Stomach (tissue), 19 donors: ENCODE measurements at regions of chr1 and their contacts with region 1.

Region 1: GRCh38 chr1:8314346-8315280 is 3.3 kb upstream of the SLC45A1 start:
- DNase-seq: peak; percentile 83 to 93
- H3K4me3 ChIP-seq: no peak overlapping the region
- H3K27ac ChIP-seq: no peak overlapping the region
- H3K4me1 ChIP-seq: peaks cover 12 to 50% (median 35%) of the 10 kb centered on the region in 4 donors
- H3K27me3 ChIP-seq: peaks cover 0 to 29% (median 10%) of the 10 kb centered on the region in 3 donors
- CTCF ChIP-seq: peak in 5 of 7 experiments; percentile 69 to 97 (median 91)
- EP300 ChIP-seq: no peak
- POLR2A ChIP-seq: no peak

Region 2: DNA sequence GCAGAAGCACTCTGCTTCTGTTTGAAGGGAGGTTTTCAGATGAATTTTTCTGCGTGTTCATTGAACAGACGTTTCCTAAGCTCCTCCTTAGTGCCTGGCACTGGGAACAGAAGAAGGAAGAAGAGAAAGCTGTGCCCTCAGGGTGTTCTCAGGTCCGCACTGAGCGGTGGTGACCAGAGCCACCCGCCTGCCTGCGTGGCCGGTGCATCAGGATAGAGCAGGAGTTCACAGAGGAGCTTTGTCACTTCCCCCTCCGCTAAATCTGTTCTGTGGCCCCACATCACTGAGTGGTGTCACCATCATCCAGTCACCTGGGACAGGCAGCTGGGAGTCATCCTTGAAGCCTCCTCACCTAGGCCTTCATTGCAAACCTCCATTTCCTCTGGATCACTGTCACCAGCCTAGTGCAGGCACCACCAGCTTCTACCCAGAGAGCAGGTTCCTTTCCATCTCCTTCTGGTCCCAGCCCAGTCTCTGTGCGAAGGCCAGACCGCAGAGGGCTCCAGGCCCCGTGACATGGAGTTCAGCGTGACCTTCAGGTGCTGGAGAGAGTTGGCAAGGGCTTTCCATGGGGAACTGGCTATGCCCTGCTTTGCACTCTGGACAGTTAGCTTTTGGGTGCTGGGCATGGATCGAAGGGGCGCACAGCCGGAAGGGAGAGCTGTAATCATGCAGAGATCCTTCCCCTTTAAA is 331.4 kb before region 1 on chr1:
- intact Hi-C with region 1: loop called (anchors 5 kb)
- DNase-seq: no peak
- H3K4me3 ChIP-seq: no peak overlapping the region
- H3K27ac ChIP-seq: no peak overlapping the region
- H3K4me1 ChIP-seq: peaks cover 0 to 14% (median 8%) of the 10 kb centered on the region in 4 donors
- H3K27me3 ChIP-seq: no peaks in the 10 kb centered on the region
- CTCF ChIP-seq: no peak
- EP300 ChIP-seq: no peak
- POLR2A ChIP-seq: no peak

Region 3: DNA sequence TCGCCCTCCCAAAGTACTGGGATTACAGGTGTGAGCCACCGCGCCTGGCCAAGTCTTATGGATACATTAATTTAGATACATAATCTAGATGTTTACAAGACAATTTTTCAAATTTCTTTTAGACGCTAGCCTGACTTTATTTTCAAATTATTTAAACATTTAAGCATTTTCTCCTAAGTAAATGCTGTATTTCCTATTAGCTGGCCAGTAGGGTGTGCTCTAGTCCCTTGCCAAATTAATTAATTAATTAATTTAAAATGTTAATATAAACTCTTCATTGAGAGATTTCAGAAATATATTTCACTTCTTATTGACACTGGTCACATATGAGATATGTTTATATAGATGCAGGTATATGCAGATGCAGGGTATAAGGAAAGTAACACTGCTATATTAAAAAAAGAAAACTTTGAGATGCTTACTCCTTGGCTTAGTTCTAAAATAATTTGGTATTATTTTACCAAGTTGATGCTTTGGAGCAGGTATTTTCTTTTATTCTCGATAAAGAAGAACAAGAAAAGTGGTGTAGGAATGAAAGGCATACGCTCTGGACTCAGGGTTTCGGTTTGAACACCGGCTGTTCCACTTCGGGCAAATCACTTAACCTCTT is 283.3 kb before region 1 on chr1:
- intact Hi-C with region 1: loop called (anchors 5 kb)
- DNase-seq: peak in 1 of 2 donors; percentile 72
- H3K4me3 ChIP-seq: no peak overlapping the region
- H3K27ac ChIP-seq: peak overlapping the region in 1 of 5 donors; percentile 60
- H3K4me1 ChIP-seq: peaks cover 21 to 40% (median 30%) of the 10 kb centered on the region in 4 donors
- H3K27me3 ChIP-seq: no peaks in the 10 kb centered on the region
- CTCF ChIP-seq: peak in 5 of 7 experiments; percentile 45 to 75 (median 52)
- EP300 ChIP-seq: no peak
- POLR2A ChIP-seq: no peak

Region 4: GRCh38 chr1:8133657-8134430 is 180.8 kb before region 1 on chr1:
- intact Hi-C with region 1: no loop called
- DNase-seq: peak; percentile 41 to 84
- H3K4me3 ChIP-seq: no peak overlapping the region
- H3K27ac ChIP-seq: peak overlapping the region in 4 of 5 donors; percentile 82 to 90 (median 84)
- H3K4me1 ChIP-seq: peaks cover 0 to 52% (median 30%) of the 10 kb centered on the region in 4 donors
- H3K27me3 ChIP-seq: no peaks in the 10 kb centered on the region
- CTCF ChIP-seq: no peak
- EP300 ChIP-seq: peak; percentile 48
- POLR2A ChIP-seq: no peak